IMR-90 (cell line): ENCODE measurements at regions of chr12 and their contacts with region 1.

Region 1: DNA sequence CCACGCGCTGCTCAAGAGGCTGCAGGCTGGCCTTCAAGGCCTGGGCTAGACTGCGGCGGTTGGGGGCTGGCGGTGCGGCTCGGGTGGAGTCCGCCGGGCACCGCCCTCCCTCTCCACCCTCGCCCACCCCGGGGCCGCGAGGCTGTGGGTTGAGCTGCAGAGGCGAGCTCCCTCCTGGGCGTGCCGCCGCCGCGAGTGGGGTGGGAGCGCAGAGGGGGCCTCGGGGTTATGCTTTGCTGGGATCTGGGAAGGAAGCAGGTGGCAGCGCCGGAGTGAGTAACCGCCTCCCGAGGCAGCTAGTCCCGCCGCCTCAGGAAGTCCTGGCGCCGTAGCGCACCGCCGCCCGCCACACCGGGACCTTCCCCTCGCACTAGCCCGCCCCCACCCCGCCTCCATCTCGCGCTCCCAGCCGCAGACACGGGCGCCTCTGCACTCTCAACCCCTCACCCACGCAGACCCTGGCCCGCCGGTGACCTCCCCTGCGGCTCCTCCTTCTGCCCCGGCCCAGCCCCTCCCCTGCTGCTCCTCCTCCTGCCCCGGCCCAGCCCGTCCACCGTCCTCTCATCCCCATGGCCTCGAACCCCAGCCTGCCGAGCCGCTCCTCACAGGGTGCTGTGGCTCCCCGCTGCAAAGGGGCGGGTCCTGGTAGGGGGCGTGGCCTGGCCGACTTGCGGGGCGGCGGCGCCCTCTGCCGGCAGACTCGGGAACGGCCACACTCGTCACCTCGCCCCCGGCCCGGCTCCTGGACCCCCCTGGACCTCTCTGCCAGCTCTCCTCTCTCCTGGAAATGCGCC is 16.6 kb downstream of the TAMALIN start:
- DNase-seq: peak; percentile 56
- ATAC-seq: peak; percentile 77
- H3K4me3 ChIP-seq: peak overlapping the region; percentile 52
- H3K27ac ChIP-seq: peak overlapping the region; percentile 41; the same call in 1 of the 2 replicates
- H3K4me1 ChIP-seq: peaks cover 6% of the 10 kb centered on the region; the same call in 1 of the 2 replicates
- H3K27me3 ChIP-seq: no peaks in the 10 kb centered on the region
- CTCF ChIP-seq: peak; percentile 96
- POLR2A ChIP-seq: no peak; the same call in none of the 2 replicates
- RAD21 ChIP-seq: peak; percentile 78

Region 2: GRCh38 chr12:51891843-51892242 is 131.5 kb before region 1 on chr12:
- CTCF ChIA-PET with region 1: interaction called, 3 read pairs
- POLR2A ChIA-PET with region 1: no interaction called
- dilution Hi-C with region 1: no loop called
- in situ Hi-C with region 1: no loop called
- intact Hi-C with region 1: loop called (anchors 5 kb)
- DNase-seq: peak; percentile 31
- ATAC-seq: no peak
- H3K4me3 ChIP-seq: no peak overlapping the region
- H3K27ac ChIP-seq: no peak overlapping the region
- H3K4me1 ChIP-seq: peaks cover 6% of the 10 kb centered on the region; the same call in 1 of the 2 replicates
- H3K27me3 ChIP-seq: no peaks in the 10 kb centered on the region
- CTCF ChIP-seq: peak; percentile 54
- POLR2A ChIP-seq: no peak
- RAD21 ChIP-seq: peak; percentile 49

Region 3: DNA sequence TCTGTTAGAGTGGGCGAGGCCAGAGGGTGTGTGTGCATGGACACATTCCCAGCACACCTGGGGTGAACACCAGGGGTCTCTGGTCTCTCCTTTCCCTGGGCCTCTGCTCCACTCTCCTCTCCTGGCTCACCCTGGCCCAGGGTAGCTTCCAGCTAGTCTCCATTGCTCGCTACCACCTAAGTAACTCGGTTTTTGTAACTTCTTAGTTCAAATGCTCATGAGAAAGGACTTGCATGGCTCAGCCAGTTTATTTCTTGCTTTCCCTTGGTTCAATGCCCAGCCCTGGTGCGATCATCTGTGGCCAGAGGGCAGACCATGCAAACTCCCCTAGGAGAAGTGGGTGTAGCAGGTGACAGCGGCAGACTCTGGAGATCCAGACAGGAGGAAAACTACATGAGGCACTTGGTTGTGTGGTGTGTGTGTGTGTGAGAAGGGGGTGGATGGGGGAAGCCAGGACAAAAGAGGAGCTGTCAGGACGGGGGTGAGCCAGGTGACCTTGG is 80.8 kb before region 1 on chr12:
- CTCF ChIA-PET with region 1: no interaction called
- POLR2A ChIA-PET with region 1: no interaction called
- dilution Hi-C with region 1: no loop called
- in situ Hi-C with region 1: no loop called
- intact Hi-C with region 1: no loop called
- DNase-seq: no peak
- ATAC-seq: no peak
- H3K4me3 ChIP-seq: no peak overlapping the region
- H3K27ac ChIP-seq: no peak overlapping the region
- H3K4me1 ChIP-seq: peaks cover 8% of the 10 kb centered on the region; the same call in 1 of the 2 replicates
- H3K27me3 ChIP-seq: peaks cover 4% of the 10 kb centered on the region; the same call in 1 of the 2 replicates
- CTCF ChIP-seq: no peak
- POLR2A ChIP-seq: no peak
- RAD21 ChIP-seq: no peak

Region 4: GRCh38 chr12:51954561-51955361 is 68.6 kb before region 1 on chr12:
- CTCF ChIA-PET with region 1: no interaction called
- POLR2A ChIA-PET with region 1: no interaction called
- dilution Hi-C with region 1: no loop called
- in situ Hi-C with region 1: no loop called
- intact Hi-C with region 1: no loop called
- DNase-seq: no peak
- ATAC-seq: no peak
- H3K4me3 ChIP-seq: no peak overlapping the region
- H3K27ac ChIP-seq: no peak overlapping the region
- H3K4me1 ChIP-seq: peaks cover 12% of the 10 kb centered on the region
- H3K27me3 ChIP-seq: peaks cover 5% of the 10 kb centered on the region
- CTCF ChIP-seq: no peak
- POLR2A ChIP-seq: no peak
- RAD21 ChIP-seq: no peak

Region 5: GRCh38 chr12:52004042-52004648 is 19.2 kb before region 1 on chr12:
- CTCF ChIA-PET with region 1: interaction called, 128 read pairs
- POLR2A ChIA-PET with region 1: interaction called, 3 read pairs
- dilution Hi-C with region 1: no loop called
- in situ Hi-C with region 1: no loop called
- intact Hi-C with region 1: loop called (anchors 1 kb)
- DNase-seq: peak; percentile 55
- ATAC-seq: peak; percentile 51
- H3K4me3 ChIP-seq: no peak overlapping the region
- H3K27ac ChIP-seq: no peak overlapping the region
- H3K4me1 ChIP-seq: peaks cover 4% of the 10 kb centered on the region; the same call in 1 of the 2 replicates
- H3K27me3 ChIP-seq: no peaks in the 10 kb centered on the region
- CTCF ChIP-seq: peak; percentile 84
- POLR2A ChIP-seq: no peak
- RAD21 ChIP-seq: peak; percentile 87

Region 6: DNA sequence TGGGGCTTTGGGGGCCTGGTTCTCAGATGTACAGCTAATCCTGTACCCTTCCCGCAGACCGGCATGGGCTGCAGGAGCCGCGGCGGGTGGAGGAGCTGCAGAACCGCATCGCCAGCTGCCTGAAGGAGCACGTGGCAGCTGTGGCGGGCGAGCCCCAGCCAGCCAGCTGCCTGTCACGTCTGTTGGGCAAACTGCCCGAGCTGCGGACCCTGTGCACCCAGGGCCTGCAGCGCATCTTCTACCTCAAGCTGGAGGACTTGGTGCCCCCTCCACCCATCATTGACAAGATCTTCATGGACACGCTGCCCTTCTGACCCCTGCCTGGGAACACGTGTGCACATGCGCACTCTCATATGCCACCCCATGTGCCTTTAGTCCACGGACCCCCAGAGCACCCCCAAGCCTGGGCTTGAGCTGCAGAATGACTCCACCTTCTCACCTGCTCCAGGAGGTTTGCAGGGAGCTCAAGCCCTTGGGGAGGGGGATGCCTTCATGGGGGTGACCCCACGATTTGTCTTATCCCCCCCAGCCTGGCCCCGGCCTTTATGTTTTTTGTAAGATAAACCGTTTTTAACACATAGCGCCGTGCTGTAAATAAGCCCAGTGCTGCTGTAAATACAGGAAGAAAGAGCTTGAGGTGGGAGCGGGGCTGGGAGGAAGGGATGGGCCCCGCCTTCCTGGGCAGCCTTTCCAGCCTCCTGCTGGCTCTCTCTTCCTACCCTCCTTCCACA is 35.4 kb after region 1 on chr12:
- CTCF ChIA-PET with region 1: interaction called, 10 read pairs
- POLR2A ChIA-PET with region 1: no interaction called
- dilution Hi-C with region 1: no loop called
- in situ Hi-C with region 1: no loop called
- intact Hi-C with region 1: no loop called
- DNase-seq: peak; percentile 54
- ATAC-seq: no peak
- H3K4me3 ChIP-seq: no peak overlapping the region
- H3K27ac ChIP-seq: no peak overlapping the region
- H3K4me1 ChIP-seq: peaks cover 16% of the 10 kb centered on the region
- H3K27me3 ChIP-seq: no peaks in the 10 kb centered on the region
- CTCF ChIP-seq: no peak
- POLR2A ChIP-seq: peak; percentile 12; the same call in 1 of the 2 replicates
- RAD21 ChIP-seq: no peak

Region 7: GRCh38 chr12:52082988-52083637 is 59.7 kb after region 1 on chr12:
- CTCF ChIA-PET with region 1: interaction called, 55 read pairs
- POLR2A ChIA-PET with region 1: interaction called, 6 read pairs
- dilution Hi-C with region 1: no loop called
- in situ Hi-C with region 1: loop called (anchors 5 kb)
- intact Hi-C with region 1: loop called (anchors 1 kb)
- DNase-seq: peak; percentile 71
- ATAC-seq: peak; percentile 68
- H3K4me3 ChIP-seq: no peak overlapping the region
- H3K27ac ChIP-seq: peak overlapping the region; percentile 66
- H3K4me1 ChIP-seq: peaks cover 30% of the 10 kb centered on the region
- H3K27me3 ChIP-seq: no peaks in the 10 kb centered on the region; the same call in 1 of the 2 replicates
- CTCF ChIP-seq: peak; percentile 87
- POLR2A ChIP-seq: no peak; the same call in 1 of the 2 replicates
- RAD21 ChIP-seq: peak; percentile 80

Region 8: DNA sequence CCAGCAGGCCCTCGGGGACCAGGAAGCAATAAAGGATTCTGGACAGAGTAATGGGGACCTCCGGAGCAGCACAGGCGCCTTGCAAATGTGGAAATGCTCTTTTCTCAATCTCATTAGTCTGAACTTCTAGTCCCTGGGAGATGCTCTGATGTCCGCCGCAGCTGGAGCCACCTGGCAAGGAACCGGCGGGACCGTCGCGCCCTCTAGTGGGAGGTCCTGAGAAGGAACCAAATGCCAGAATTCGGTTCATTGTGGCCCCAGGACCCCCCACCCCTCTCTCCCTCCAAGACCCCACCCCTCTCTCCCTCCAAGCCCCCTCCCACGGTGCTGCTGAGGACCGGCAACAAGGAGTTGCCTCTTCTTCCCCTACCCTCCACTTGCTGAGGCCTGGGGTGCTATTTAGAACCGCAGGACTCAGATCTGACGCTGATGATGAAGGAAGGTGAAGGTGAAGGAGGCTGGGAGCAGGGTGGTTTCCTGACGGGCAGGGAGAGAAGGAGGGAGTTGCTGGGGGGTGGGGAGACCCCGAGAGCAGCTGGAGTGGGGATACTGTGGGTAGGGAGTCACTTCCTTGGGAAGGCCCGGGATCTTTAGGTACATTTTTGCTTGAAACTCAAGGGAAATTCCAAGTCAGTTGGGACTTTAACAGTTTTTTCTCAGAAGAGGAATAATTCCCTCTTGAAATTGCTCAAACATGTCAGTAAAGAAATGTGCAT is 98.6 kb after region 1 on chr12:
- CTCF ChIA-PET with region 1: interaction called, 35 read pairs
- POLR2A ChIA-PET with region 1: no interaction called
- dilution Hi-C with region 1: no loop called
- in situ Hi-C with region 1: loop called (anchors 5 kb)
- intact Hi-C with region 1: loop called (anchors 1 kb)
- DNase-seq: peak; percentile 58
- ATAC-seq: peak; percentile 75
- H3K4me3 ChIP-seq: no peak overlapping the region
- H3K27ac ChIP-seq: no peak overlapping the region
- H3K4me1 ChIP-seq: no peaks in the 10 kb centered on the region
- H3K27me3 ChIP-seq: peaks cover 5% of the 10 kb centered on the region
- CTCF ChIP-seq: peak; percentile 76
- POLR2A ChIP-seq: no peak
- RAD21 ChIP-seq: peak; percentile 76